PC-9 (cell line): ENCODE measurements at regions of chr15 and their contacts with region 1.

Region 1: GRCh38 chr15:81449836-81450495 is 76.0 kb upstream of the TMC3 start:
- DNase-seq: no peak
- H3K4me3 ChIP-seq: no peak overlapping the region
- H3K27ac ChIP-seq: no peak overlapping the region
- H3K4me1 ChIP-seq: no peaks in the 10 kb centered on the region
- H3K27me3 ChIP-seq: no peaks in the 10 kb centered on the region
- CTCF ChIP-seq: no peak

Region 2: DNA sequence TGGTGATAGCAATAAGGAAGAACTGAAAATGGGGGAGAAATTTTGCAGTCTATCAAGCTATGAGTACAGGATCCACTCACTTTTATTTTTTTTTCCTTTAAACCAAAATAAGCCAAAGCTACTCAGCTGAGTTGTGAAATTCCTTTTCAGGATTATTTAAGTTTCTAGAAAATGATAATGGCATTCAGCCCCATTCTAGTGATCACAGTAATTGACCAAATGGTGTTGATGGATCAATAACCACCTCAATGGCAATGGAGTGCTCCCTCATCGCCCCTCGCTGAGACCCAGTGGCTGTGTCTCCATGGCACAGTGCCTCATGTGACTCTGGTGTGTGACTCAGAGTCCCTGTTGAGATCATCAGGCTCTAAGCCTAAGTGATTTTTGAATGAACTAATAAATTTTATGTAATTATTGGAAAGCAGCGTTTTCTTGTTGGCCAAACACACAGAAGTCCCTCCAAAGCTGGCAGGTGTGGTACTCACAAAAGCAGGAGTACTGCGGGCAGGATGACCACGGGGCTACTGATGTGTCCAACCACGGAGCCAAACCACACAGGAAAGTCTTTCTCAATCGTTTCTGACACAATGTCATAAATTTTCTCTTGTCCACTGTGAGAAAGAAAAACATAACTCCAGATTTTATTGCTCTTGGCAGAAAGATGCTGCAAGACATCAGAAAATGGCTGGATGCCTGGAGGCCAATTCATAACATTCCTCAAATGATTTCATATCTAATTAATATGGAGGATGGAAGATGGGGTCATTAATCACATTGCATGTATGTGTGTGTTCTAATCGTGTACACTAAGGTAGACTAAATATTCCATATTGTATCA is 111.6 kb before region 1 on chr15:
- CTCF ChIA-PET with region 1: no interaction called
- POLR2A ChIA-PET with region 1: no interaction called
- intact Hi-C with region 1: no loop called
- DNase-seq: peak in 1 of 2 experiments; percentile 38
- H3K4me3 ChIP-seq: no peak overlapping the region
- H3K27ac ChIP-seq: no peak overlapping the region
- H3K4me1 ChIP-seq: no peaks in the 10 kb centered on the region
- H3K27me3 ChIP-seq: peaks cover 31% of the 10 kb centered on the region
- CTCF ChIP-seq: no peak

Region 3: GRCh38 chr15:81432179-81432578 is 17.8 kb before region 1 on chr15:
- CTCF ChIA-PET with region 1: no interaction called
- POLR2A ChIA-PET with region 1: interaction called, 11 read pairs
- intact Hi-C with region 1: no loop called
- DNase-seq: no peak
- H3K4me3 ChIP-seq: no peak overlapping the region
- H3K27ac ChIP-seq: no peak overlapping the region
- H3K4me1 ChIP-seq: no peaks in the 10 kb centered on the region
- H3K27me3 ChIP-seq: peaks cover 3% of the 10 kb centered on the region; the same call in 1 of the 2 replicates
- CTCF ChIP-seq: no peak